ENCODE measurements at regions of chr1 and their contacts with region 1.

Region 1: GRCh38 chr1:157147906-157148717 is 9.9 kb upstream of the ETV3 start:
- DNase-seq: no peak
- ATAC-seq: peak; percentile 61
- H3K4me3 ChIP-seq: no peak overlapping the region
- H3K4me3 Mint-ChIP-seq: peak overlapping the region in 1 of 10 donors; percentile 1
- H3K27ac ChIP-seq: no peak overlapping the region
- H3K27ac Mint-ChIP-seq: peak overlapping the region in 7 of 9 donors; percentile 0 to 85 (median 20)
- H3K4me1 ChIP-seq: no peaks in the 10 kb centered on the region
- H3K4me1 Mint-ChIP-seq: peaks cover 5 to 41% (median 16%) of the 10 kb centered on the region in 7 donors
- H3K27me3 ChIP-seq: no peaks in the 10 kb centered on the region
- H3K27me3 Mint-ChIP-seq: peaks cover 0 to 7% (median 0%) of the 10 kb centered on the region in 5 donors

Region 2: DNA sequence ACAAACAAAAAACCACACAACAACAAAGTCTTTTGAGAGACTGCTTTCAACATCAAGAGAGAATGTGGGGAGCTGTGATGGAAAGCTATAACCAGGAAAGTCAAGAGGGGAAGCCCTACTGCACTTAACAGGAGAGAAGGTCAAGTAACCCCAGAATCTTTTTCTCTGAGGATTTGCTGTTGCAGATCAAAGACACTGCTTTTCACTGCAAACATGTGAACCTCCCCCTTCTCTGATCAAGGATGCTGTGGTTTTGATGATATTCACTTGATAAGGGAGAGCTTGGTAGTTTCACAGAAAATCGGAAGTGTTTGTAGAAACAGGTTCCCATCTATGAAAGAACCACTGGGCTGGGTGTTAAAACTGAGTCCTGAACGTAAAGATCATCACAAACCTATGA is 14.7 kb before region 1 on chr1:
- CTCF ChIA-PET with region 1: no interaction called
- POLR2A ChIA-PET with region 1: interaction called, 3 read pairs
- intact Hi-C with region 1: loop called in 1 of 2 experiments (anchors 2 kb)
- DNase-seq: peak in 7 of 9 donors; percentile 59 to 76 (median 69)
- ATAC-seq: peak; percentile 48
- H3K4me3 ChIP-seq: peak overlapping the region; percentile 19
- H3K4me3 Mint-ChIP-seq: peak overlapping the region; percentile 12 to 97 (median 70)
- H3K27ac ChIP-seq: peak overlapping the region; percentile 18
- H3K27ac Mint-ChIP-seq: peak overlapping the region; percentile 37 to 89 (median 70)
- H3K4me1 ChIP-seq: peaks cover 52 to 54% of the 10 kb centered on the region in 2 donors
- H3K4me1 Mint-ChIP-seq: peaks cover 53 to 82% (median 69%) of the 10 kb centered on the region in 7 donors
- H3K27me3 ChIP-seq: no peaks in the 10 kb centered on the region
- H3K27me3 Mint-ChIP-seq: no peaks in the 10 kb centered on the region

Region 3: GRCh38 chr1:157181258-157181657 is 33.1 kb after region 1 on chr1:
- CTCF ChIA-PET with region 1: no interaction called
- POLR2A ChIA-PET with region 1: no interaction called
- intact Hi-C with region 1: no loop called
- DNase-seq: no peak
- ATAC-seq: no peak
- H3K4me3 ChIP-seq: no peak overlapping the region
- H3K4me3 Mint-ChIP-seq: no peak overlapping the region
- H3K27ac ChIP-seq: no peak overlapping the region
- H3K27ac Mint-ChIP-seq: no peak overlapping the region
- H3K4me1 ChIP-seq: no peaks in the 10 kb centered on the region
- H3K4me1 Mint-ChIP-seq: peaks cover 0 to 5% (median 0%) of the 10 kb centered on the region in 7 donors
- H3K27me3 ChIP-seq: no peaks in the 10 kb centered on the region
- H3K27me3 Mint-ChIP-seq: peaks cover 19 to 46% (median 32%) of the 10 kb centered on the region in 5 donors

Region 4: GRCh38 chr1:157369808-157370521 is 221.9 kb after region 1 on chr1:
- CTCF ChIA-PET with region 1: no interaction called
- POLR2A ChIA-PET with region 1: no interaction called
- intact Hi-C with region 1: no loop called
- DNase-seq: peak in 5 of 9 donors; percentile 14 to 34 (median 29)
- ATAC-seq: peak; percentile 76
- H3K4me3 ChIP-seq: no peak overlapping the region
- H3K4me3 Mint-ChIP-seq: no peak overlapping the region
- H3K27ac ChIP-seq: no peak overlapping the region
- H3K27ac Mint-ChIP-seq: no peak overlapping the region
- H3K4me1 ChIP-seq: no peaks in the 10 kb centered on the region
- H3K4me1 Mint-ChIP-seq: no peaks in the 10 kb centered on the region
- H3K27me3 ChIP-seq: no peaks in the 10 kb centered on the region
- H3K27me3 Mint-ChIP-seq: peaks cover 15 to 24% (median 21%) of the 10 kb centered on the region in 5 donors

Region 5: DNA sequence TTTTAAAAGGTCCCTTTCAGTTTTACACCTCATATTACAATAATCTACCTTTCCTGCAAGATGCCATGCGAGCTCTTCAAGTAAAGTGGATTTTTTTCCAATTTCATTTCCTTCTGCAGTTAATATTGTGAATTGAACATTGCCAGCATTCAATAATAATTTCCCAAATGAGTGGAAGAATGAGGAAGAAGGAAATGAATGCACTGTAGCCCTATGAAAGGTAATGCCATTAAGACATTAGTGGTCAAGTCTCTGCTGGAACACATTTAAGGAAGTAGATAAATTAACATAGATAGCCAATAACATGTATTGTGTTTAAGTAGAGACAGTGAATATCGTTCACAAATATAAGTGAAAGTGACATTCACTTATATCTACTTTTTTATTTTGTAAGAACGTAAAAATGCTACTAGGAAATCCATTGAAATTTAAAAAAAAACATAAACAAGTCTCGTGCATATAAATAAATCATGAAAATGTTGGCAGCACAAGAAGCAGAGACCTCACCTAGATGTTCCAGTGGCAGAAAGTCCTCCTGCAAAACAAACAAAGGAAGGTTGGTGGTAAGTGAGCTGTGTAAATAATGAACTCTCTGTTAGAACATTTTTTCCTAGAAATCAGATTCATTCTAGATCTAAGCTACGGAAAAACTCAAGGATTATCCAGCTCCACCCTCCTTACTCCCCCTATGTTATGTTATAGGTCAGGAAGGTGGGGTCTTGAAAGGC is 534.8 kb after region 1 on chr1:
- CTCF ChIA-PET with region 1: no interaction called
- POLR2A ChIA-PET with region 1: no interaction called
- intact Hi-C with region 1: no loop called
- DNase-seq: no peak
- ATAC-seq: no peak
- H3K4me3 ChIP-seq: no peak overlapping the region
- H3K4me3 Mint-ChIP-seq: no peak overlapping the region
- H3K27ac ChIP-seq: no peak overlapping the region
- H3K27ac Mint-ChIP-seq: no peak overlapping the region
- H3K4me1 ChIP-seq: no peaks in the 10 kb centered on the region
- H3K4me1 Mint-ChIP-seq: no peaks in the 10 kb centered on the region
- H3K27me3 ChIP-seq: no peaks in the 10 kb centered on the region
- H3K27me3 Mint-ChIP-seq: peaks cover 0 to 29% (median 3%) of the 10 kb centered on the region in 5 donors

Measured in naive thymus-derived CD4-positive, alpha-beta T cell (primary cell).